Activated T-helper 1 cell treated with anti-CD3 and anti-CD28 coated beads, Interleukin-12 subunit alpha, Interleukin-12 subunit beta, Interleukin-2, Interleukin-4 antibody, amounts not matched to agents 30 ng/mL and 10 ng/mL and 1 ng/mL, durations not matched to agents 14 hours and 24 hours and 36 hours (primary cell): ENCODE measurements at regions of chr12 and their contacts with region 1.

Region 1: DNA sequence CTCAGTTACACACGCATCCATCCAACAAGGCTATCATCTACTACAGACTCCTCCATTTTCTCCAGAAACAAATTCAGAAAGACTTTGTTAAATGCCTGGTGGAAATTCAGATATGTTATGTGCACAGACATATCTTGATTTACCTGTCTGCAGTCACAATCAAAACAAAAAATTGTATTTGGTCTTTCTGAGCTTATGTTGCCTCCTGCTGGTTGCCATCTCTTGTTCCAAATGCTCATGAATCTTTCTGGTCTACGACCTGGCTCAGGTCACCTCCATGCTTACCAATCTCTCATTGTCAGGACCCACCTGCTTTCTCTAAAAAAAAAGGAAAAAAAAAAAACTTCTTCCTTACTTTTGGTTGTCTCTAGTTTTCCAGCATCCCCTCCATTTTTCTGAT is 169.2 kb upstream of the PLXNC1 start:
- DNase-seq: peak; percentile 15
- H3K4me3 Mint-ChIP-seq: no peak overlapping the region
- H3K27ac Mint-ChIP-seq: no peak overlapping the region
- H3K4me1 Mint-ChIP-seq: peaks cover 42% of the 10 kb centered on the region
- H3K27me3 Mint-ChIP-seq: peaks cover 10% of the 10 kb centered on the region

Region 2: DNA sequence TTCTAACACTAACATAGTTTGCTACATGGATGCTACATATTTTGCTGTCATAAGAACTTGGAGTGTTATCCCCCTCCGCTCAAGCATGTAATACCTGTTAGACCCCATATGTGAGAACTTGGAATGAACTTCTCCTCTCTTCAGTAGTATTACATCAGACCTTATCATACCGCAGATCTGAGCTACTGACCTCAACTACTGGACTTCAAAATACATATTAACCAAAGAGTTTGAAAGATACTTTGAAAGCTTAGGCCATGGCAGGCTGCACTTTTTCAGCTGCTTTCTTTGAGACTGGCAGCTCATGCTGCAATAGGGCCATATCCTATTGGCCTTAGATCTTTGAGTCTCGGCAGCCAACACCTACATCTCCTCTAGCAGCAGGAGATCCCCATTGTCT is 1124.8 kb before region 1 on chr12:
- intact Hi-C with region 1: loop called (anchors 5 kb)
- DNase-seq: no peak
- H3K4me3 Mint-ChIP-seq: no peak overlapping the region
- H3K27ac Mint-ChIP-seq: no peak overlapping the region
- H3K4me1 Mint-ChIP-seq: no peaks in the 10 kb centered on the region
- H3K27me3 Mint-ChIP-seq: no peaks in the 10 kb centered on the region

Region 3: GRCh38 chr12:93502802-93503623 is 476.2 kb before region 1 on chr12:
- intact Hi-C with region 1: loop called (anchors 1 kb)
- DNase-seq: peak; percentile 42
- H3K4me3 Mint-ChIP-seq: no peak overlapping the region
- H3K27ac Mint-ChIP-seq: no peak overlapping the region
- H3K4me1 Mint-ChIP-seq: peaks cover 32% of the 10 kb centered on the region
- H3K27me3 Mint-ChIP-seq: no peaks in the 10 kb centered on the region

Region 4: GRCh38 chr12:93766796-93767523 is 212.2 kb before region 1 on chr12:
- intact Hi-C with region 1: loop called (anchors 1 kb)
- DNase-seq: peak; percentile 40
- H3K4me3 Mint-ChIP-seq: peak overlapping the region; percentile 0
- H3K27ac Mint-ChIP-seq: no peak overlapping the region
- H3K4me1 Mint-ChIP-seq: peaks cover 34% of the 10 kb centered on the region
- H3K27me3 Mint-ChIP-seq: peaks cover 6% of the 10 kb centered on the region

Region 5: GRCh38 chr12:93879476-93880421 is 99.4 kb before region 1 on chr12:
- intact Hi-C with region 1: loop called (anchors 1 kb)
- DNase-seq: no peak
- H3K4me3 Mint-ChIP-seq: peak overlapping the region; percentile 23
- H3K27ac Mint-ChIP-seq: peak overlapping the region; percentile 95
- H3K4me1 Mint-ChIP-seq: peaks cover 35% of the 10 kb centered on the region
- H3K27me3 Mint-ChIP-seq: no peaks in the 10 kb centered on the region